HEK293 (cell line): ENCODE measurements at regions of chr6 and their contacts with region 1.

Region 1: DNA sequence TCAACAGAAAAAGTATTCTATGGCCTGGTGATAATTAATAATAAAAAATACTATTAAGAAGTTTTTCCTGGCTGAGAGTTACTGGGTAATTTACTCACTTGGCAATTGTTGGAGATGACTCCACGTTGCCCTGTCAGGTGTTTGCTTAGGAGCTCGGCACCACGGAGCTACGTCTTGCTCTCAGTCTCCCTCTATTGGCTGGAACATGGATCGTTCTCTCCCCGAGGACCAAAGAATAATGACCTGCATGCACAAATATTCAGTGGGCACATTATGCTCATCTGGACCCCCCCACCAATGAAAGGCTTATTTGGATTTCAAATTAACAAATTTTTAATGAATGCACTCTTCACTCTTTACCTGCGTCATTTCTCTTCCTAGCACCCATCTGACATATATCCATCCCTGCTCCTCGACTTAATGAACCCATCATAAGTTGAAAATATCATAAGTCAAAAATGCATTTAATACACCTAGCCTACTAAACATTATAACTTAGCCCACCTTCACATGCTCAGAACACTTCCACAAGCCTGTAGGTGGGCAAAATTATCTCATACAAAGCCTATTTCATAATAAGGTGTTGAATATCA is 71.0 kb upstream of the CD83 start:
- H3K4me3 ChIP-seq: no peak overlapping the region
- H3K27ac ChIP-seq: no peak overlapping the region
- H3K4me1 ChIP-seq: no peaks in the 10 kb centered on the region
- CTCF ChIP-seq: peak; percentile 26; the same call in 1 of the 2 replicates

Region 2: DNA sequence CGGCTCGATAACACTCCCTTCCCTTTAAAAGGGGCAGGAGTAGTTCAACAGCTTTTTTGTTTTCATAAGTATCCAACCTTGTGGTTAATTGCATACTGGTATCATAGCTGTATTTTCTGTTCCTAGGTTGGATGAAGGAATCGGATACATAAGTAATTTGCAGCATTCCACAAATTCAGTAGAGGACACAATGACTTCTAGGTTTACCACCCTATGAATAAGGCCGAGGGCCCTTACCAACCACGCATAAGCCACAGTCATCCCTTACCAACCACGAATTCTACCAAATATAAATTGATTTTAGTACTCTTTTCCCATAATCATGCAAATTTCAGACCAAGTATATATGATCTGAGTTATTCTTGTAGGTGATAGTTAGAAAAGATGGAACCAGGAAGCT is 268.5 kb before region 1 on chr6:
- CTCF ChIA-PET with region 1: no interaction called
- POLR2A ChIA-PET with region 1: no interaction called
- H3K4me3 ChIP-seq: no peak overlapping the region
- H3K27ac ChIP-seq: no peak overlapping the region
- H3K4me1 ChIP-seq: no peaks in the 10 kb centered on the region
- CTCF ChIP-seq: no peak

Region 3: DNA sequence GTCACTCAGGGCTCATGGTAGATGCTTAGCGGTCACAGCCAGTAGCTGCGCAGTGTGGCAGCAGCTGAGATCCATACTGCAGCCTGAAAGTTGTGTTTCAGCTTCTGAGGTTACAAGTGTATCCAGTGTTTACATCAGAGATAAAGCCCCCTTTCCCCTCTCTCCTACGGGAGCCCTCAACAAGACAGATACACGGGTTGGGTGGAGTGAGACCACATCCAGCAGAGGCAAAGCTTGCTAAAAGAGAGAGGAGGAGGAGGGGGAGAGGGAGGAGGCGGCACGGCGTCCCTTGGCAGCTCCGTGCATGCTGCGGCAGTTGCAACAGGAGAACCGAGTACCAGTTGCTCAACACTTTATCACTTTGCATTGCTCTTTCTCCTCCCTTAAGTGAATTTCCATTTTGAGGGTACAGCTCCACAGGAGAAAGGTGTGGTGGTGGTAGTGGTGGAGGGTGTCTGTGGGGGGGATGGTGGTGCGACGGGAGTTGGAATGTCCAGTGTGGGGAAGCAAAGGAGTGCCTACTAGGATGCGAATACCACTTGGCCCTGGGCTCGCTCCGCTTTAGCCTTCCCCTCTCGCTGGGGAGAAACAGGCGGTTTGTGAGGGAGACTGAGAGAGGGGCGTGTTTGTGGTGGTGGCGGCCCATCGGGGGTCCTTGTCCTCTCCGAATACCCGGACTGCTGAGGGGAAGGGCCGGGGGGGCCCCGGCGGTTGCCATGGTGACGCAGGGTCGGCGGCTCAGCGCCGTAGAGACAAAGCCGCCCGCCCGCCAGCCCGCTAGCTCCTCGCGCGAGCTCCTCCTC is 122.2 kb before region 1 on chr6:
- CTCF ChIA-PET with region 1: interaction called, 27 read pairs
- POLR2A ChIA-PET with region 1: interaction called, 6 read pairs
- H3K4me3 ChIP-seq: peak overlapping the region; percentile 73
- H3K27ac ChIP-seq: peak overlapping the region; percentile 40
- H3K4me1 ChIP-seq: no peaks in the 10 kb centered on the region
- CTCF ChIP-seq: no peak

Region 4: GRCh38 chr6:14059791-14060444 is 13.3 kb after region 1 on chr6:
- CTCF ChIA-PET with region 1: interaction called, 25 read pairs
- POLR2A ChIA-PET with region 1: no interaction called
- H3K4me3 ChIP-seq: no peak overlapping the region
- H3K27ac ChIP-seq: no peak overlapping the region
- H3K4me1 ChIP-seq: no peaks in the 10 kb centered on the region
- CTCF ChIP-seq: no peak

Region 5: DNA sequence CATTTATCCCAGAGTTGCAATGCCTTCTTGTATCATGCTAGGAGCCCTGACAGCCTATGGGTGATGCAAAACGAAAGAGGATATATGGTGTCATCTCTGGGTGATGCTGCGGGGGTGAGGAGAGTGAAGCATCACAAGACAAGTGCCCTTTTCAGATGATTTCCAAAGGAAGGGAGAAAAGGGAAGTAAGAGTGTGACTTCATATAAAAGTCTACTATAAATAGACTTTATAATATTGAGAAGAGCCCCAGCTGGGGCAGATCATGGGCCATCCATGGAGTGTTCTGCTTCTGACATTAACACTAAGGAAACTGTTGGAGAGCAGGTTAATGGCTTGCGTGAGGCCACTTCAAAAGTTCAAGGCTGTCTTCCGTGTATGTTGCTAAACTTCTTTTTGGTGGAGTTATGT is 75.4 kb after region 1 on chr6:
- CTCF ChIA-PET with region 1: no interaction called
- POLR2A ChIA-PET with region 1: no interaction called
- H3K4me3 ChIP-seq: no peak overlapping the region
- H3K27ac ChIP-seq: no peak overlapping the region
- H3K4me1 ChIP-seq: peaks cover 5% of the 10 kb centered on the region
- CTCF ChIP-seq: no peak